Sciatic nerve (tissue), 2 donors: ENCODE measurements at regions of chr3 and their contacts with region 1.

Region 1: DNA sequence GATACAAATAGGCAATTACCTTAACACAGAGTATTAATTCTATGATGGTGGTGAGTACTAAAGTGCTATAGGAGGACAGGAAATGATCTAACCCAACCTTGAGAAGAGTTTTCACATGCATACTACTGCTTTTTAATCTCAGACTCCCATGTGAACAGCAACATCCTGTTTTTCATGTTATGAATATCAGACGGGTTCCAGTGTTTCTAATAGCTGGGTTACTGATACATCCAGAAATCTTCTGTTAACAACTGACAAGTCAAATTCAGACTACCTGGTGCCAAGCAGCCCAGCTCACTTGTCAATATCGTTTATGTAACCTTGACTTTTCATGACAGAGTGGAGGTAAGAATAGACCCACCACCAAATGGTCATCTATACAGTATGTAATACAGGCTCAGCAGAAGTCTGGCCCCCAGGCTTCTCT is 220.2 kb upstream of the COL8A1 start:
- DNase-seq: no peak
- ATAC-seq: no peak

Region 2: DNA sequence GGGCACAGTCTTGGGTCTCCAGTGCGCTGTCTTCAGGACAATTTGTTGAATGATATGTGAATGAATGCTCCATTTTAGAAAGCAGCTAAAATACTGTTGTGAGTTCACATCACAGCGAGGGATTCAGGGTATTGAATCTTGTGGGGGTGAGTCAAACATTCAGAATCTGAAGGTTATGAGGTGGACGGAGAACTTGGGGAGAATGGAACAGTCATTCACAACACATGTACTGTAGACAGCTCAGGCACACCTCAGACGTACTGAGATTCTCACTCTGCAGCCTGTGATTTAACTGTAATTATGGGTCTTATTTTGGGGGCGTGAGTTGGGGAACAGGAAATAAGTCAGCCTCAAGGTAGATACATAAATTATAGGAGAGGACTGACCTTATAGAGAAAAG is 1582.5 kb before region 1 on chr3:
- intact Hi-C with region 1: no loop called
- DNase-seq: no peak
- ATAC-seq: no peak

Region 3: DNA sequence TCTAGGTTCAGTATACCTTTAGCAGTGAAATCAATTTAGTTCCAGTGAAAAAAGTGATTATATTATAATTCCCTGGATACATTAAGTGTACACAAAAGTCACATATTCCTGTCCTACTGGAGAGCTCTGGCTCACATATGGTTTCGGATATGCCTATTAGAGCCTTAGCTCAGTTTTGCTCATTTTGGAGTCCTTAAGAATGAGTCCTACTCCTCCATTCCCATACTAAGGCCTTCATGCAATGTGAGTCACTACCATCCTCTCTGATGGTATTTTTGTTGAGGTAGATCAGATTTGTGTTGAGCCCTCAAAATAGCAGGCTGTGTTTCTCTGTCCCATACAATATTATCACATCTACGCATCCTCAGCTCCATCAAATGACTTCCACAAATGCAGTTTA is 74.0 kb before region 1 on chr3:
- intact Hi-C with region 1: loop called (anchors 2 kb)
- DNase-seq: no peak
- ATAC-seq: no peak

Region 4: GRCh38 chr3:100289339-100289738 is 871.1 kb after region 1 on chr3:
- intact Hi-C with region 1: loop called (anchors 5 kb)
- DNase-seq: no peak
- ATAC-seq: no peak